ENCODE measurements at regions of chr20 and their contacts with region 1.

Region 1: DNA sequence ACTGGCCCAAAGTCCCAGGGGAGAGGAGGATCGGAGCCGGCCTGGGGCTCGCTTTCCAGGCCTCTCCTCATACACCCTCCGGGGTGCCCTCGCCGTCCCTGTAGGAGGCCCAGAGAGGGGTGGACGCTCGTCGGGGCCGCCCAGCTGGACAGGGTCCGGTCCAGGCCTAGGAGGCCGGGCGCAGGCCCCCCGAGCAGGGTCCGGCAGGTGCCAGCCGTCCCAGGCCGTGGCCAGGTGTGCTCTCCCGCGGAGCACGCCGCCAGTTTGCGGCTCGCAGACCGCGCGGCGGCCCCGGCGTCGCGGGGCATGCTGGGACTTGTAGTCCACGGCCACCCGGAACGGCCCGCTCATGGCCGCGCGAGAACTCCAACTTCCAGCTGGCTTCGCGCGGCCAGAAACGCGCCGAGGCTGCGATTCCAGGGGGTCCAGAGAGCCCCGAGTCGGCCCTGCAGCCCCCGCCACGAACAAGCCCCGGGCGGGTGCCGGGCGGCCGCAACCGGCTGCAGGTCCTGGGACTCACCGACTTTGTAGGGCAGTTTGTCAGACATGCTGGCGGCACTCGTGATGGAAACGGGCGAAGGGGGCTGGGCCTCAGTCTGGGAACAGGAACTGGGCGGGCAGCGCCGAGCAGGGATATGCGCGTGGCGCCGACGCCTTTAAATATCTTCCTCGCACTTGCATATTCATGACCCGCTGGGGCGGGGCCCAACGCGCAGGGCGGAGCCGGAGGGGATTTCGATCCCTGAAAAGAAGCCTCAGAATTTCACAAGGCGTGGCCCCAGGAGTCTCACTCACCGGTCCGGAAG is at the start of gene AHCY:
- ATAC-seq: peak; percentile 85 to 93 (median 87)
- H3K4me3 ChIP-seq: peak within 1 kb of the TSS; percentile 72 to 90 (median 84)
- H3K27ac ChIP-seq: peak within 1 kb of the TSS; percentile 86 to 92
- H3K4me1 ChIP-seq: peaks cover 15 to 19% of the 10 kb centered on the region in 2 donors
- total RNA-seq, gene AHCY: 84.9 to 333 (median 101) TPM

Region 2: DNA sequence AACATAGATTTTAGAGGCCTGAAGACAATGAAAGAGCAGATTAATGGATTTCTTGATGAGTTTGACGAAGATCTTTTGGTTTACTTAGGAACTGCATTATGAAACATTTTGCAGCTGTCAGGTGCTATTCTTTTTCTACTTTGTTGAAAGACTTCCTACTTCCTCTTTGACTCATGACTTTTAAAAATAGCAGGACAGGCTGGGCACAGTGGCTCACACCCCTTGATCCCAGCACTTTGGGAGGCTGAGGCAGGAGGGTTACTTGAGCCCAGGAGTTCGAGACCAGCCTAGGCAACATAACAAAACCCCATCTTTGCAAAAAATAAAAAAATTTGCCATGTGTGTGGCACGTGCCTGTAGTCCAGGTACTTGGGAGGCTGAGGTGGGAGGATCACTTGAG is 112.2 kb after region 1 on chr20:
- in situ Hi-C with region 1: loop called in 1 of 9 experiments (anchors 25 kb)
- ATAC-seq: no peak
- H3K4me3 ChIP-seq: no peak overlapping the region
- H3K27ac ChIP-seq: no peak overlapping the region
- H3K4me1 ChIP-seq: no peaks in the 10 kb centered on the region

Region 3: DNA sequence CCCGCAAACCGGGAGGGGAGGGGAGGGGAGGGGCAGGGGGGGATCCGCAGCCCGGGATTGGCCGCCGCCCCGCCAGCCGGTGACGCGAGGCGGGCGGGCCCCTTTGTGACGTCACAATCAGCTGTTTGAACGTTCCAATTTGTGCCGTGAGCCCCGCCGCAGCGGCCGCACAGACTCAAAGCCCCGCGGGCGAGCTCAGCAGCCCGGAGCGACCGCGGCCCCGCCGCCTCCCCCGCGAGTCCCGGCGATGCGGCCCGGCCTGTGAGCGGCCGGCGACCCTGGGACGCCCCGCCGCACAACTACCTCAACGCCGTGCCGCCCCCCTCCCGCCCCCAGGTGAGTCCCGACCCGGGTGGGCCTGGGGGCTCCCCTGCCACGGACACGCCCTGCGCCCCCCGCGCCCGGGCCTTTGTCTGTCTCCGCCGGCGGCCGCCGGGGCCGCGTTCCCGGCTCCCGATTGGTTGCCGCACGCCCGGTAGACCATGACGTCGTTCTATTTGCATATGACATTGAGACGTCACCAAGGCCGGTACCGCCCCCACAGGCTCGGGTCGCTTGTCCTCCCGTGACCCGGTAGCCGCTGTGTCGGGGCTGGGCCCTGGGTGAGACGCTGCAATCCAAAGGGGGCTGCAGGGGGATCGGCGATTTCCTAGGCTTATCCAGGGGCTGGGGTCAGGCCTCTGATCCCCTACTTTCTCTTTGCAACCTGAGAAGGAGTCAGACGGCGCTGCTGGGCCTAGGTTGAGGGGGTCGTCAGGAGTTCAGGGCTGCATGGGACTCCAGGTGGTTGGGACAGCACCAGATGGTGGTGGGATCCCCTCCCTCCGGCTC is 401.5 kb after region 1 on chr20 and contains the start of gene TP53INP2:
- in situ Hi-C with region 1: loop called in 1 of 9 experiments (anchors 25 kb)
- ATAC-seq: peak; percentile 58 to 75 (median 65)
- H3K4me3 ChIP-seq: peak within 1 kb of the TSS; percentile 75 to 99 (median 91)
- H3K27ac ChIP-seq: peak within 1 kb of the TSS; percentile 93 to 99
- H3K4me1 ChIP-seq: peaks cover 7 to 11% of the 10 kb centered on the region in 2 donors
- total RNA-seq, gene TP53INP2: 3.7 to 15.3 (median 11.0) TPM